Naive thymus-derived CD4-positive, alpha-beta T cell (primary cell): ENCODE measurements at regions of chr12 and their contacts with region 1.

Region 1: DNA sequence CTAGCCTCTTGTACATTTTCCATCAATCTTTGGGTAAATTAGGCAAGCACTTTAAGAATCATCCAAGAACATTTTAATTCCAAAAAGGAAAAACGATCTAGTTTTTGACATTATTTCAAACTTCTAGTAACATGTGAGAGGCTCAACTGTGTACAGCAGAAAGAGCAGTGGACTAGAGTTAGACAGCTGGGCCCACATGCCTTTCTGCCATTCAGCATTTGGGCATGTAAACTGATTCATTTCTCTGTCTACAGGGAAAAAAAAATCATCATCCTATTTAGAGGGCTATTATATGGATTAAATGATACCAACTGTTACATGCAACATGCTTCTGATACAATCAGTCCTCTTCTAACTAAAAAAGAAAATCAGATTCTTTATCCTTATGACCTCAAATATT is 17.7 kb downstream of the ATP2B1 start:
- DNase-seq: no peak
- ATAC-seq: no peak
- H3K4me3 ChIP-seq: no peak overlapping the region
- H3K4me3 Mint-ChIP-seq: no peak overlapping the region
- H3K27ac ChIP-seq: no peak overlapping the region
- H3K27ac Mint-ChIP-seq: peak overlapping the region in 1 of 9 donors; percentile 55
- H3K4me1 ChIP-seq: peaks cover 6 to 12% of the 10 kb centered on the region in 2 donors
- H3K4me1 Mint-ChIP-seq: peaks cover 2 to 79% (median 70%) of the 10 kb centered on the region in 7 donors
- H3K27me3 ChIP-seq: no peaks in the 10 kb centered on the region
- H3K27me3 Mint-ChIP-seq: no peaks in the 10 kb centered on the region

Region 2: GRCh38 chr12:89703768-89704167 is 12.8 kb after region 1 on chr12:
- CTCF ChIA-PET with region 1: no interaction called
- POLR2A ChIA-PET with region 1: no interaction called
- intact Hi-C with region 1: loop called in 1 of 2 experiments (anchors 2 kb)
- DNase-seq: no peak
- ATAC-seq: no peak
- H3K4me3 ChIP-seq: no peak overlapping the region
- H3K4me3 Mint-ChIP-seq: peak overlapping the region in 1 of 10 donors; percentile 49
- H3K27ac ChIP-seq: no peak overlapping the region
- H3K27ac Mint-ChIP-seq: peak overlapping the region in 1 of 9 donors; percentile 54
- H3K4me1 ChIP-seq: peaks cover 16 to 47% of the 10 kb centered on the region in 2 donors
- H3K4me1 Mint-ChIP-seq: peaks cover 19 to 83% (median 68%) of the 10 kb centered on the region in 7 donors
- H3K27me3 ChIP-seq: no peaks in the 10 kb centered on the region
- H3K27me3 Mint-ChIP-seq: peaks cover 0 to 18% (median 0%) of the 10 kb centered on the region in 5 donors